Body of pancreas (tissue), 4 donors: ENCODE measurements at regions of chr2 and their contacts with region 1.

Region 1: DNA sequence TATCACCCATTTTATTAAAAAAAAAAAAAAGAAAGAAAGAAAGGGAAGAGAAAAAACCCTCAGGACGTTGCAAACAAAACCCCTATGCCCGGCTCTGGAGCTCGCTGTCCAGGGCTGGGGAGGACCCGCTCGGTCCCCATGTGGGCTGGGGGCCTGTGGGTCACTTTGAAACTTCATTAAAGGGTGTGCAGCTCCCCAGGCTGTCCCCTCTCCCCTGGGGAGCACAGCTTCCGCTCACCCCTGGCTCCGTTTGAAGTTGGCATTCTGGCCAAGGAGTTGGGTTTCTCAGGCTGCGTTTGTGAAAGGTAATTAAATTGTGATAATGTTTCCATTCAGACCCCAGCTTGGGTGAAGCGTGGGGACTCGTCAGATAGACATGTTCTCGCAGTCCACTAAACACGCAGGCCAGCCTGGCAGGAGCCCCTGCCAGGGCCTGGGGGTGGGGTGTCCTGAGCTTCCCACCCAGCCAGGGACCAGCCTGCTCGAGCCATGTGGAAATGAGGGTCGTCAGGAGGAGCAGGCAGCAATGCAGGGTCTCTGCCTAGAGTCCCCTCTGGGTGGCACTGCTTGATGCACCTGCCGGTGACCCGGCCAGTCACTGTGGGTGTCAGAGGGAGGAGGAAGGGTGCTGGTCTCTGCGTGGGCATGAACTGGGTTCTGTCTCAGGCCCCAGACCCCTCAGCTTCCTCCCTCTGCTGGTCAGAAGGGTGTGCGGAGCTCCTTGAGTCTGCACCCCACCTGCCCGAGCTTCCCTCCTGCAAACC is 166.2 kb downstream of the INHBB start:
- DNase-seq: no peak
- ATAC-seq: no peak
- H3K4me3 ChIP-seq: no peak overlapping the region
- H3K27ac ChIP-seq: no peak overlapping the region
- H3K4me1 ChIP-seq: no peaks in the 10 kb centered on the region
- H3K27me3 ChIP-seq: no peaks in the 10 kb centered on the region
- CTCF ChIP-seq: no peak
- POLR2A ChIP-seq: no peak

Region 2: GRCh38 chr2:120680136-120680761 is 168.1 kb after region 1 on chr2:
- intact Hi-C with region 1: loop called (anchors 10 kb)
- DNase-seq: peak; percentile 86 to 92 (median 88)
- ATAC-seq: peak; percentile 74
- H3K4me3 ChIP-seq: no peak overlapping the region
- H3K27ac ChIP-seq: no peak overlapping the region
- H3K4me1 ChIP-seq: peaks cover 3% of the 10 kb centered on the region
- H3K27me3 ChIP-seq: no peaks in the 10 kb centered on the region
- CTCF ChIP-seq: peak; percentile 36 to 93 (median 82)
- POLR2A ChIP-seq: no peak

Region 3: GRCh38 chr2:120737340-120738101 is 225.4 kb after region 1 on chr2:
- intact Hi-C with region 1: no loop called
- DNase-seq: peak in 3 of 4 donors; percentile 42 to 58 (median 55)
- ATAC-seq: no peak
- H3K4me3 ChIP-seq: no peak overlapping the region
- H3K27ac ChIP-seq: no peak overlapping the region
- H3K4me1 ChIP-seq: peaks cover 48% of the 10 kb centered on the region
- H3K27me3 ChIP-seq: peaks cover 0 to 42% of the 10 kb centered on the region in 2 donors
- CTCF ChIP-seq: no peak
- POLR2A ChIP-seq: no peak